Posterior vena cava (tissue), 2 donors: ENCODE measurements at regions of chr3 and their contacts with region 1.

Region 1: GRCh38 chr3:94071713-94072284 is 8.9 kb downstream of the NSUN3 start:
- DNase-seq: no peak

Region 2: GRCh38 chr3:94009608-94010007 is 62.2 kb before region 1 on chr3:
- intact Hi-C with region 1: loop called in 1 of 2 experiments (anchors 5 kb)
- DNase-seq: no peak

Region 3: GRCh38 chr3:94049267-94049666 is 22.5 kb before region 1 on chr3:
- intact Hi-C with region 1: no loop called
- DNase-seq: no peak